Aorta (tissue), 5 donors: ENCODE measurements at regions of chr5 and their contacts with region 1.

Region 1: GRCh38 chr5:176365610-176366404 is 520 bp downstream of the ARL10 start:
- DNase-seq: peak; percentile 75 to 86
- ATAC-seq: peak; percentile 49
- H3K4me3 ChIP-seq: peak overlapping the region; percentile 46 to 65
- H3K27ac ChIP-seq: peak overlapping the region in 1 of 2 donors; percentile 0
- H3K4me1 ChIP-seq: no peaks in the 10 kb centered on the region
- H3K27me3 ChIP-seq: no peaks in the 10 kb centered on the region

Region 2: DNA sequence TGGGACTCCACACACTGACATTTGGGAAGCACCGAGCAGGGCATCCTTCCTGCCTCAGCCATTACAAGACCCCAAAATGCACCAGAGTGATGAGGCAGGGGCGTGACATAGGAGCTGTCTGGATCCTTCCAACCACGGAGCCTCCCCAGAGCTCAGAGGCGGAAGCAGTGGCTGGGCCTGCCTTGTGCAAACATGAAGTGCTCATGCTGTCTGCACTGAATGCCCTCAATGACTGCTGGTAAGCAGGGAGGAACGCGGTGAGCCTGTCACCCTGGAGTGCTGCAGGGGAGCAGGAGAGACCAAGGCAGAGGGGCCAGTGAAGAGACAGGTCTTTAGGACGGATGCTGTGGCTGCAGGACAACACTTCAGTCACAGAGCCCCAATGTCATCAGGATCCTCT is 768.1 kb before region 1 on chr5:
- intact Hi-C with region 1: no loop called
- DNase-seq: no peak
- ATAC-seq: no peak
- H3K4me3 ChIP-seq: no peak overlapping the region
- H3K27ac ChIP-seq: no peak overlapping the region
- H3K4me1 ChIP-seq: no peaks in the 10 kb centered on the region
- H3K27me3 ChIP-seq: no peaks in the 10 kb centered on the region

Region 3: GRCh38 chr5:175778951-175779538 is 586.8 kb before region 1 on chr5:
- intact Hi-C with region 1: no loop called
- DNase-seq: no peak
- ATAC-seq: no peak
- H3K4me3 ChIP-seq: no peak overlapping the region
- H3K27ac ChIP-seq: no peak overlapping the region
- H3K4me1 ChIP-seq: no peaks in the 10 kb centered on the region
- H3K27me3 ChIP-seq: no peaks in the 10 kb centered on the region

Region 4: GRCh38 chr5:176388444-176389134 is 22.8 kb after region 1 on chr5 and contains the starts of genes HIGD2A and NOP16:
- intact Hi-C with region 1: loop called in 1 of 2 experiments (anchors 2 kb)
- DNase-seq: peak; percentile 100
- ATAC-seq: peak; percentile 98
- H3K4me3 ChIP-seq: peak within 1 kb of the TSS; percentile 35 to 39
- H3K27ac ChIP-seq: peak within 1 kb of the TSS; percentile 31 to 56
- H3K4me1 ChIP-seq: peaks cover 0 to 3% of the 10 kb centered on the region in 2 donors
- H3K27me3 ChIP-seq: no peaks in the 10 kb centered on the region
- total RNA-seq, gene HIGD2A: 46.8 to 60.9 TPM
- total RNA-seq, gene NOP16: 9.7 to 19.2 TPM

Region 5: DNA sequence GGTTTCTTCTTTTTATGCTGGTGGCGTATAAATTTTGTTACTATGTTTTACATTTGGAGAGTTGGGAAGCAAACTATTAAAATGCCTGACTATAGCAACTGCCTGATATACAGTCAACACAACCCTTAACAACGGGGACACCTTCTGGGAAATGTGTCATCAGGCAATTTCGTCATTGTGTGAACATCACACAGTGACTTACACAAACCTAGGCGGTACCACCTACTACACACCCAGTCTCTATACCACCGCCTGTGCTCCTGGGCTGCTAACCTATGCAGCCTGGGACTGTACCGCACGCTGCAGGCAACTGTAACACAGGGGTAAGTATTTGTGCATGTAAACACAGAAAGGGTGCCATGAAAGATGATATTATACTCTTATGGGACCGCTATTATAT is 182.0 kb after region 1 on chr5:
- intact Hi-C with region 1: no loop called
- DNase-seq: no peak
- ATAC-seq: no peak
- H3K4me3 ChIP-seq: no peak overlapping the region
- H3K27ac ChIP-seq: no peak overlapping the region
- H3K4me1 ChIP-seq: no peaks in the 10 kb centered on the region
- H3K27me3 ChIP-seq: no peaks in the 10 kb centered on the region